ENCODE measurements at regions of chr14 and their contacts with region 1.

Region 1: GRCh38 chr14:23186913-23187654 is 3.6 kb upstream of the SLC7A8 start:
- DNase-seq: peak in 1 of 2 experiments; percentile 51
- H3K4me3 ChIP-seq: no peak overlapping the region
- H3K27ac ChIP-seq: no peak overlapping the region
- H3K4me1 ChIP-seq: peaks cover 0 to 2% (median under 1%) of the 10 kb centered on the region in 4 experiments; a peak in 5 of 7 replicates
- H3K27me3 ChIP-seq: no peaks in the 10 kb centered on the region
- CTCF ChIP-seq: peak in 2 of 3 experiments; percentile 78 to 81; a peak in 3 of 4 replicates
- EP300 ChIP-seq: no peak
- POLR2A ChIP-seq: no peak
- RAD21 ChIP-seq: peak; percentile 85 to 86

Region 2: DNA sequence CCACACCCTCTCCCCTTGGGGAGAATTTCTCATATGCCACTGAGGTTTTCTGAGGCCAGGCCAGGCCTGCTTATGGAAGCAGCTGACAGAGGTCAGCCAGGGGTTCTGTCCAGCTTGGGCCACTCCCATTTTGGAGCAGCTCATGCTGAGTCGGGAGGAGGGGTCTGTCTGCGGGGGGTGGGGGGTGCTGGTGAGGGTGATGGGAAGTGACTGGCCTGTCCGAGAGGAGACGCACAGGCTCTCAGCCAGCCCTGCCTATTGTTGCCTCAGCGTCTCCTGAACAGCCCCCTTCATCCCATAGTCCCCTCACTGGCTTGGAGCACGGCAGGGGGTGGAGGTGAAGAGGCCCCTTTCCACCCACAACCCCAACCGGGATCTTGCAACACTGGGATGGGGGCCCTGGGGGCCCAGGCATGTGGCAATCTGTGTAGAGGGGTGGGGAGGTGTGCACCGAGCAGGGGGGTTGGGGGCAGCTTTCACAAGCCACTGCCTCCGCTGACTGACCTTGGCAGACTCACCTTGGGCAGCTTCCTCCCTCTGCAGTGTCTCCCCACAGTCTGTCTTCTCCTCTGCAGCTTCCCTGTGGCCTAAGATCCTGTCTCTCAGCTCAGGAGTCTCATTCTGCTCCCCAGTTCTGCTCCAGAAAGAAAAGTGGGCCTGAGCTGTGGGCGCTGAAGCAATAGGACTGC is 73.5 kb before region 1 on chr14:
- CTCF ChIA-PET with region 1: interaction called, 290 read pairs
- POLR2A ChIA-PET with region 1: interaction called, 3 read pairs
- DNase-seq: no peak
- H3K4me3 ChIP-seq: 0 out of 8 replicates have a peak overlapping the region, but pooled peaks of 1 of the 4 experiments have one; percentile 17
- H3K27ac ChIP-seq: no peak overlapping the region
- H3K4me1 ChIP-seq: peaks cover 0 to 14% (median 4%) of the 10 kb centered on the region in 4 experiments; a peak in 6 of 7 replicates
- H3K27me3 ChIP-seq: peaks cover 0 to 3% (median 0%) of the 10 kb centered on the region in 4 experiments; a peak in 2 of 7 replicates
- CTCF ChIP-seq: no peak
- EP300 ChIP-seq: no peak
- POLR2A ChIP-seq: no peak
- RAD21 ChIP-seq: no peak

Region 3: GRCh38 chr14:23160924-23161538 is 26.1 kb before region 1 on chr14:
- CTCF ChIA-PET with region 1: interaction called, 18 read pairs
- POLR2A ChIA-PET with region 1: interaction called, 7 read pairs
- DNase-seq: peak in 1 of 2 experiments; percentile 83
- H3K4me3 ChIP-seq: peak overlapping the region in 1 of 4 experiments; percentile 47; a peak in 2 of 8 replicates
- H3K27ac ChIP-seq: peak overlapping the region; percentile 79; the same call in 1 of the 2 replicates
- H3K4me1 ChIP-seq: peaks cover 9 to 31% (median 17%) of the 10 kb centered on the region in 4 experiments
- H3K27me3 ChIP-seq: no peaks in the 10 kb centered on the region
- CTCF ChIP-seq: no peak
- EP300 ChIP-seq: no peak
- POLR2A ChIP-seq: peak; percentile 43 to 54
- RAD21 ChIP-seq: no peak; a peak in 2 of 4 replicates

Region 4: DNA sequence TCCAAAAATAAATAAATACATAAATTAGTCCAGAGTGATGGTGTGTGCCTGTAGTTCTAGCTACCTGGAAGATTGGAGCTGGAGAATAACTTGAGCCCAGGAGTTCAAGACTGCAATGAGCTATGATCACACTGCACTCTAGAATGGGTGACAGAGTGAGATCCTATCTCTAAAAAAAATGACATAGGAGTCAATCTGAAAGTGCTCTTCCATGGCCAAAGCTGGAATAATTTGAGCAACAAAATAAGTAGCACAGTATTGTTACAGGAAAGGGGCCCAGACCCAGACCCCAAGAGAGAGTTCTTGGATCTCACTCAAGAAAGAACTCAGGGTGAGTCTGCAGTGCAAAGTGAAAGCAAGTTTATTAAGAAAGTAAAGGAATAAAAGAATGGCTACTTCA is 21.2 kb after region 1 on chr14:
- CTCF ChIA-PET with region 1: interaction called, 15 read pairs
- POLR2A ChIA-PET with region 1: no interaction called
- DNase-seq: no peak
- H3K4me3 ChIP-seq: no peak overlapping the region
- H3K27ac ChIP-seq: no peak overlapping the region
- H3K4me1 ChIP-seq: peaks cover 0 to 13% (median 4%) of the 10 kb centered on the region in 4 experiments; a peak in 4 of 7 replicates
- H3K27me3 ChIP-seq: no peaks in the 10 kb centered on the region
- CTCF ChIP-seq: no peak
- EP300 ChIP-seq: no peak
- POLR2A ChIP-seq: no peak
- RAD21 ChIP-seq: no peak

Region 5: DNA sequence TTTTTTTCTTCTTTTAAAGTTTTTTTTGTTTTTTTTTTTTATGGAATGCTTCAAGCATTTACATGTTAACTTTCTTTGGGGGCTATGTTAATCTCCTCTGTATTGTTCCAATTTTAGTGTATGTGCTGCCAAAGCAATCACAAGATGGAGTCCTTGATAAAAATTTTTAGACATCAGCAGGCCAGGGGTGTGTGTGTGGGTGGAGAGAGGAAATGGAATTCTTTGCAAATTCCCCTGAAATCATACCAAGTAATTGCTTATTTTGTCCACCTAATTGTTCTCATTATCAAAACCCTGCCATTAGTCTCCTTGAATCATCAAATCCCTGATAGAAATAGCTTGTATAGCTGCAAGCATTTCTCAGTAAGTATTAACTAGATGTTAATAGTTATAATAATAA is 72.3 kb after region 1 on chr14:
- CTCF ChIA-PET with region 1: interaction called, 15 read pairs
- POLR2A ChIA-PET with region 1: interaction called, 3 read pairs
- DNase-seq: no peak
- H3K4me3 ChIP-seq: no peak overlapping the region
- H3K27ac ChIP-seq: no peak overlapping the region
- H3K4me1 ChIP-seq: peaks cover 0 to 6% (median 0%) of the 10 kb centered on the region in 4 experiments; a peak in 1 of 7 replicates
- H3K27me3 ChIP-seq: no peaks in the 10 kb centered on the region
- CTCF ChIP-seq: no peak
- EP300 ChIP-seq: no peak
- POLR2A ChIP-seq: no peak
- RAD21 ChIP-seq: no peak

Measured in H1 (cell line).